ENCODE measurements at regions of chr12 and their contacts with region 1.

Region 1: GRCh38 chr12:122190842-122191668 is 8.1 kb downstream of the LRRC43 start:
- DNase-seq: peak; percentile 81 to 88 (median 86)
- ATAC-seq: peak; percentile 98
- H3K4me3 ChIP-seq: no peak overlapping the region
- H3K27ac ChIP-seq: no peak overlapping the region
- H3K4me1 ChIP-seq: peaks cover 8 to 19% of the 10 kb centered on the region in 2 experiments; a peak in 4 of 5 replicates
- H3K27me3 ChIP-seq: no peaks in the 10 kb centered on the region
- CTCF ChIP-seq: peak; percentile 91 to 95 (median 93)
- EP300 ChIP-seq: peak; percentile 37; the same call in 1 of the 2 replicates
- POLR2A ChIP-seq: no peak
- RAD21 ChIP-seq: peak; percentile 78 to 91

Region 2: DNA sequence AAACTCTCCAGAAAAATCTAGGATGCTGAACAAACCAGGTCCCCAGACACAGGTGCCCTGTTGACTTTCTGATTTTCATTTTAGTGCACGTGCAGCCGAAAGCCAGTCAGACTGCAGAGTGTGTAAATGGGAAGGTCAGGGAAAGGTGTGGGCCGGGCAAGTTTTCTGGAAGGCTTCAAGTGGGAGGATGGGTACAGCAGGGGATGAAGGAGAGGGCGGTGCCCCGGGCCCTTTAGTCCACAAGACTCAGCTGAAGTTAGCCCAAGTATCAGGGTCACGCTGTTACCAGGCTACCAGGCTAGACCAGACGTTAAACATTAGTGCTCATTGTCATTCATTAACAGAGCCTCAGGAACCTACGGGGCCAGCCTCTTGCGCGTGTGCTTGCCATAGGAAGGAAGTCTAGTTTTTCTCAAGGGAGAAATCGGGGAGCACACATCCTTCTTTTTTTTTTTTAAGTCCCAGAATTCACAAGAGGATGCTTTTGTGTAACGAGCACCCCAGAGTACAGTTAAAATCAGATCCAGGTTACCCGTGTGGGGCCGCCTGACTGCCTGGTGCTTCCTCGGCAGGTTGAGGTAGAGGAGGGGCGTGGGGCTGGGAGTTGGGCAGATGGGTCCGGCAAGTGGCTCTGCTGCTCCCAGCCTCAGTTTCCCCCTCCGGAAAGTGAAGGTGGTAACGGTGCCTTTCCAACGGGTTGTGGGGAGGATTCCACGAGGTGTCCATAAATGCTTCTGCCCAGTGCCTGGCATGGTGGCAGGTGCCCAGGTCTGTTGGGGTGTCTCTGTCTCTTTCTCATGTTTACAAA is 150.3 kb before region 1 on chr12:
- CTCF ChIA-PET with region 1: no interaction called
- POLR2A ChIA-PET with region 1: no interaction called
- in situ Hi-C with region 1: loop called (anchors 5 kb)
- intact Hi-C with region 1: no loop called
- DNase-seq: no peak
- ATAC-seq: no peak
- H3K4me3 ChIP-seq: no peak overlapping the region
- H3K27ac ChIP-seq: no peak overlapping the region
- H3K4me1 ChIP-seq: peaks cover 0 to 3% of the 10 kb centered on the region in 2 experiments; a peak in 1 of 5 replicates
- H3K27me3 ChIP-seq: no peaks in the 10 kb centered on the region
- CTCF ChIP-seq: no peak
- EP300 ChIP-seq: no peak
- POLR2A ChIP-seq: no peak
- RAD21 ChIP-seq: no peak

Region 3: GRCh38 chr12:122052285-122052684 is 138.8 kb before region 1 on chr12:
- CTCF ChIA-PET with region 1: interaction called, 19 read pairs
- POLR2A ChIA-PET with region 1: no interaction called
- in situ Hi-C with region 1: no loop called
- intact Hi-C with region 1: loop called (anchors 1 kb)
- DNase-seq: no peak
- ATAC-seq: no peak
- H3K4me3 ChIP-seq: no peak overlapping the region
- H3K27ac ChIP-seq: no peak overlapping the region
- H3K4me1 ChIP-seq: peaks cover 0 to 14% of the 10 kb centered on the region in 2 experiments; a peak in 3 of 5 replicates
- H3K27me3 ChIP-seq: no peaks in the 10 kb centered on the region
- CTCF ChIP-seq: no peak
- EP300 ChIP-seq: no peak
- POLR2A ChIP-seq: no peak
- RAD21 ChIP-seq: no peak

Region 4: DNA sequence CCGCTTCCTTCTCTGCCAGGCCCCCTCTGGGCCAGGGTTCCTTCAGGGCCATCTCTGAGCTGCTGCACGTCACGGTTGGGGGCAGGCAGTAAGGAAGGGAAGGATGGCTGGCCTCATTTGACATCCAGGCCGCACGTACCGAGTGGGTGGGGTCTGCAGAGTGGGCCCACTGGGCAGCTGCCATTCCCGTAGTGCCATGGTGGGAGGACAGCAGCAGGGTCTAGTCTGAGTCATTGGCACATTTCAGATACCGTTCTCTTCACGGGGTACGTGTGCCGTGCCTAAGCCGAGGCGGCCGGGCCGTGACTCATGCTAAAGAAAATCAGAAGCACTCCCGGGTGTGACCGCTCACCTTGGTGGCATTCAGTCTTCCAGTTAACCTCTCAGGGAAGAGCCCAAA is 60.9 kb before region 1 on chr12:
- CTCF ChIA-PET with region 1: interaction called, 8 read pairs
- POLR2A ChIA-PET with region 1: no interaction called
- in situ Hi-C with region 1: no loop called
- intact Hi-C with region 1: loop called (anchors 2 kb)
- DNase-seq: no peak
- ATAC-seq: no peak
- H3K4me3 ChIP-seq: no peak overlapping the region
- H3K27ac ChIP-seq: no peak overlapping the region
- H3K4me1 ChIP-seq: 0 out of 5 replicates have a peak, but pooled peaks cover 0 to 5% of the 10 kb centered on the region in 2 experiments
- H3K27me3 ChIP-seq: no peaks in the 10 kb centered on the region
- CTCF ChIP-seq: no peak
- EP300 ChIP-seq: no peak
- POLR2A ChIP-seq: no peak
- RAD21 ChIP-seq: no peak

Region 5: DNA sequence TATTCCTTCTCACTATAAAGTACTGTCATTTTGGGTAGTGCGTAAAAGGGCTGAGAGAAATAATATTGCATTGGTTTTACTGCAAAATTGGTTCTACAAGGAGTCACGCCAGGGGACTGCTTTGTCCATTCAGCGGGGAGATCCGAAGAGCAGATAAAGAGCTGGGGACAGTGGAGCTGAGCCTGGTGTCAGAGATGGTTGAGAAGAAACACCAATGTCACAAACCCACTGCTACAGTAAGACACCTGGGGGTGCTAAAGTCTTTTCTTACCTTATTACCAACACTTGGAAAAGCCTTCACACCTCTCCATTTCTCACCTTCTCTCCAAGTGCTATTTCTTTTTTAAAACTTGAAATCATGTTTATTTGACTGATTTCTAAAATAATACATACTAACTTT is 31.2 kb before region 1 on chr12:
- CTCF ChIA-PET with region 1: no interaction called
- POLR2A ChIA-PET with region 1: no interaction called
- in situ Hi-C with region 1: no loop called
- intact Hi-C with region 1: loop called (anchors 5 kb)
- DNase-seq: peak in 2 of 4 experiments; percentile 58 to 67
- ATAC-seq: peak; percentile 85
- H3K4me3 ChIP-seq: no peak overlapping the region
- H3K27ac ChIP-seq: no peak overlapping the region
- H3K4me1 ChIP-seq: peaks cover 8 to 10% of the 10 kb centered on the region in 2 experiments; a peak in 4 of 5 replicates
- H3K27me3 ChIP-seq: peaks cover 2 to 5% of the 10 kb centered on the region in 2 experiments; a peak in 2 of 5 replicates
- CTCF ChIP-seq: peak; percentile 31 to 57 (median 40); a peak in 5 of 6 replicates
- EP300 ChIP-seq: no peak
- POLR2A ChIP-seq: no peak
- RAD21 ChIP-seq: peak; percentile 16 to 67; a peak in 3 of 4 replicates